Heart left ventricle (tissue), 16 donors: ENCODE measurements at regions of chr2 and their contacts with region 1.

Region 1: GRCh38 chr2:6896930-6897759 is 19.6 kb downstream of the RSAD2 start:
- DNase-seq: no peak
- ATAC-seq: peak in 2 of 4 donors; percentile 29 to 54
- H3K4me3 ChIP-seq: no peak overlapping the region
- H3K27ac ChIP-seq: peak overlapping the region in 2 of 12 donors; percentile 9 to 20
- H3K4me1 ChIP-seq: peaks cover 0 to 4% (median 0%) of the 10 kb centered on the region in 12 donors
- H3K27me3 ChIP-seq: no peaks in the 10 kb centered on the region
- CTCF ChIP-seq: peak; percentile 58 to 84 (median 74)
- POLR2A ChIP-seq: no peak

Region 2: DNA sequence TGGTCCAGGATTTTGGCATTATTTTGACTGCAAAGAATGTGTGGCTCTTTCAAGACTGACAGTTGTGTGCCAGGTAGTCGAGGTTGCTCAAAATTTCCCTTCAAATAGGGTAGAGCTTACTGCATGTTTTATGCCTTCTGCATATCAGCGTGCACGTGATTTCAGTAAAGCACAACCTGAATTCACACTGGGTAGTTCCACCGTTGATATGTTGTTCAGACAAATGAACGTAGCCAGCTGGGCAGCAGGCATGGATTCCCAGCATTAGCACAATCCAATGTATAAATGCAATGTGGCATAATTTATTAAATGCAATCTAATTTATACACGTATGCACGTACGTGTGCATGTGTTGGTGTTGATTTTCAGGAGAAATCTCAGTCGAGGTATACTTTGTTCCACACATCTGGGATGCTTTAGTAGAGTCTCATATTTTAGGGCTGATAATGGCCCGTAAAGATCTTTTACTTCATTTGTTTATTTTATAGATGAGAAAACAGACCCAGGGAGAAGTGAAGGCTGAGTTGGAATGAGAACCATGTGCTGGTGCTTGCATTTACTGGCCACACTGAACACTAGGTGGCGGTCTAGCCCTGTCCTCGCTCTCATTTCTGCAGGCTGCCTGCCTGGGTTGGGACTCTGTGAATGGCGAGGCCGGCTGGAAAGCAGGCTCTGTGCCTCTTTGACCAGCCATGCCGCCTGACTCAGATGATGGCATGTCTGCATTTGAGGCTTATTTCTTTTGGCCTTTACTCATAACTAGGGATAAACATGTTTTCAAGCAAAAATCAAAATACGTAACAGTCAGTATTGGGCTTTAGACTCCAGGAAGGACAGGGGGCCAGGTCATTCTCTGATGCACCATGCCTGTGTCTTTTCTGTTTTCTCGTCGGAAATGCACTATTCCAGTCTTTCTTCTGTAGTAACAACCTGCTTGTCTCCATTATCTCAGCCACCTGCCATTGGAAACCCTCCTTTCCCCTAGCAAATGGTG is 140.5 kb after region 1 on chr2:
- intact Hi-C with region 1: loop called in 2 of 10 experiments (anchors 5 kb)
- DNase-seq: peak; percentile 50 to 79 (median 54)
- ATAC-seq: peak in 3 of 4 donors; percentile 71 to 82 (median 78)
- H3K4me3 ChIP-seq: no peak overlapping the region
- H3K27ac ChIP-seq: no peak overlapping the region
- H3K4me1 ChIP-seq: peaks cover 0 to 12% (median 0%) of the 10 kb centered on the region in 12 donors
- H3K27me3 ChIP-seq: no peaks in the 10 kb centered on the region
- CTCF ChIP-seq: peak; percentile 43 to 79 (median 63)
- POLR2A ChIP-seq: no peak

Region 3: GRCh38 chr2:7044261-7045250 is 147.4 kb after region 1 on chr2:
- intact Hi-C with region 1: loop called (anchors 1 to 5 kb)
- DNase-seq: peak; percentile 58 to 81 (median 70)
- ATAC-seq: peak; percentile 74 to 86 (median 84)
- H3K4me3 ChIP-seq: no peak overlapping the region
- H3K27ac ChIP-seq: peak overlapping the region in 1 of 12 donors; percentile 4
- H3K4me1 ChIP-seq: peaks cover 0 to 17% (median 2%) of the 10 kb centered on the region in 12 donors
- H3K27me3 ChIP-seq: no peaks in the 10 kb centered on the region
- CTCF ChIP-seq: peak; percentile 91 to 99 (median 98)
- POLR2A ChIP-seq: no peak